Mammary epithelial cell (primary cell): ENCODE measurements at regions of chr2 and their contacts with region 1.

Region 1: DNA sequence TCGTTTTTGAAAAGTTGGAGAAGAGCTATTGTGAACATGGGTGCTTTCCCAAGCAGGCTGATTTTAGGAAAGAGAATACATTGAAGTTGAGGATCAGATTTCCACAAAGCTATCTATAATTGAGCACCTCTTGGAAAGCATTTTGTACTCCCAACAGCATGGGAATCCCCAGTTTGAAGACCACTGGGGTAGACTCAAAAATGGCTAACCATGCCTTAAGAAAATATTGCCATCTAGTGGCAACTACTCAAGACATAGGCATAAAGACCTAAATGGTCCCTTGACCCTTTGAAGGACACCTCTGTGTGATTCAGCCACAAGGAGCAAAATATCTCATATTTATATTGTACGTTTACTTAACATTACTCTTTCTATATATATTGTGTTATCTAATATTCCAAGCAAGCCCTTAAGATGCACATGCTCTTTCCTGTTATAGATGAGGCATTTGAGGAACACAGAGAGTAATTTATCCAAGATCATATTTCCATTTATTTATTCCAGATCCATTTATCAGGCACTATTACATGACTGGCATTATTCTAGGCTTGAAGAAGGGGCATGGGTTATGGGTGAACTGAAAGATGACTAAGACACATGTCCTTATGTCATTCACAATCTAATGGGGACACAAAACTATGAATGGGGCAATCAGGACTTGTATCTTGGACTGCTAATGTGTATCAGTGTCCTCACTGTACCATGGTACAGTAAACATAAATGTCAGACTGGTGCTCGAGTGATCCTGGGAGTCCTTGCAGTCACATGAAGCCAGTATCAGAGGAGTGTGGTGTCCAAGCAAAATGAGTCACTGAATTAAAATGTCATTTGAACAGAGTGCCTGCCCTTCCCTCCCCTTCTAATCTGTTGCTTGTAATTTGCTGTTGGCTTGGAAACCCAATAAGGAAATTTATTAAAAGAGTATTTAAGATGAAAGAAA is 121.0 kb upstream of the XPO1 start:
- DNase-seq: peak; percentile 21
- H3K4me3 ChIP-seq: no peak overlapping the region
- H3K27ac ChIP-seq: no peak overlapping the region
- H3K4me1 ChIP-seq: peaks cover 5% of the 10 kb centered on the region
- H3K27me3 ChIP-seq: no peaks in the 10 kb centered on the region
- CTCF ChIP-seq: peak; percentile 65 to 66

Region 2: DNA sequence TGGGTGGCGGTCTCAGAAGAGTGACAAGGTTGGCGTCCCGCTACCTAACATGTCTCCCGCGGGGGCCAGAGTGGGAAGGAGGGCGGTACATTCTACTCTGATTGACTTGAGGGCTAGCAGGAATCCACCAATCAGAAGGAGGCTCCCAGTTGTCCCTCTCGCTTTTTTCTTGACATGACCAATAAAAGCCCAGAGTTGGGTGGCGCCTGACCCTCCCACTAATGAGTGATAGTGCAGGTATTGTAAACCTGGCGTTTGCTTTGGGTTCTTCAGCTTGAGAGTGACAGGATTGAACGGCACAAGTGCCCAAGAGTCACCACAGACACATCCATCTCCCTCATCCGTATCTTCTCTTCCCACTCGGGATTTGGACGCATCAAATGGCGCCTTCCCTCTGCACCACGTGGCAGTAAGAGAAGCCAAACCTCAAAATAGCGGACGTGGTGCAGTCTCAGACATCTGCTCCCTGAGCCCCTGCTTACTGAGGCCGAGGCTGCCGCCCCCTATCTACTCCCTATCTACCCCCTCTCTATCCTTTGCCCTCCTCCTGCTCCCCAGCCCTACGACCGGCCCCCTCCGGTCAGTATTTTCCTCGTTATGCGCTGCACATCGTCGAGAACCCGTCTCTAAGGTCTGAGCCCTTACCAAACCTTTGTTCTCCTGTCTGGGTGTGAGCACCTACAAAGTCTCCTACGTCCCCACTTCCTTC is 195.5 kb after region 1 on chr2:
- CTCF ChIA-PET with region 1: no interaction called
- dilution Hi-C with region 1: no loop called
- in situ Hi-C with region 1: no loop called
- intact Hi-C with region 1: loop called (anchors 5 kb)
- DNase-seq: peak; percentile 95
- H3K4me3 ChIP-seq: peak overlapping the region; percentile 76 to 82 (median 76)
- H3K27ac ChIP-seq: peak overlapping the region; percentile 79
- H3K4me1 ChIP-seq: peaks cover 8% of the 10 kb centered on the region
- H3K27me3 ChIP-seq: no peaks in the 10 kb centered on the region
- CTCF ChIP-seq: peak in 1 of 2 donors; percentile 3